ENCODE measurements at regions of chr15 and their contacts with region 1.

Region 1: GRCh38 chr15:84929744-84930371 is 45.4 kb downstream of the SLC28A1 start:
- DNase-seq: no peak
- H3K4me3 ChIP-seq: no peak overlapping the region
- H3K27ac ChIP-seq: no peak overlapping the region
- H3K4me1 ChIP-seq: no peaks in the 10 kb centered on the region; a peak in 1 of 7 replicates
- H3K27me3 ChIP-seq: no peaks in the 10 kb centered on the region
- CTCF ChIP-seq: no peak
- EP300 ChIP-seq: no peak
- POLR2A ChIP-seq: no peak
- RAD21 ChIP-seq: no peak

Region 2: GRCh38 chr15:84840741-84841429 is 89.0 kb before region 1 on chr15:
- CTCF ChIA-PET with region 1: interaction called, 41 read pairs
- POLR2A ChIA-PET with region 1: no interaction called
- DNase-seq: no peak
- H3K4me3 ChIP-seq: no peak overlapping the region
- H3K27ac ChIP-seq: no peak overlapping the region
- H3K4me1 ChIP-seq: no peaks in the 10 kb centered on the region
- H3K27me3 ChIP-seq: no peaks in the 10 kb centered on the region
- CTCF ChIP-seq: no peak
- EP300 ChIP-seq: no peak
- POLR2A ChIP-seq: no peak
- RAD21 ChIP-seq: no peak

Region 3: GRCh38 chr15:84871428-84872305 is 58.2 kb before region 1 on chr15:
- CTCF ChIA-PET with region 1: interaction called, 39 read pairs
- POLR2A ChIA-PET with region 1: no interaction called
- DNase-seq: no peak
- H3K4me3 ChIP-seq: no peak overlapping the region
- H3K27ac ChIP-seq: no peak overlapping the region
- H3K4me1 ChIP-seq: no peaks in the 10 kb centered on the region
- H3K27me3 ChIP-seq: no peaks in the 10 kb centered on the region
- CTCF ChIP-seq: peak; percentile 30 to 40 (median 40)
- EP300 ChIP-seq: no peak
- POLR2A ChIP-seq: no peak
- RAD21 ChIP-seq: peak; percentile 34 to 48

Region 4: GRCh38 chr15:84904419-84904818 is 25.4 kb before region 1 on chr15:
- CTCF ChIA-PET with region 1: interaction called, 14 read pairs
- POLR2A ChIA-PET with region 1: interaction called, 3 read pairs
- DNase-seq: no peak
- H3K4me3 ChIP-seq: no peak overlapping the region
- H3K27ac ChIP-seq: no peak overlapping the region
- H3K4me1 ChIP-seq: no peaks in the 10 kb centered on the region; a peak in 2 of 7 replicates
- H3K27me3 ChIP-seq: no peaks in the 10 kb centered on the region
- CTCF ChIP-seq: no peak
- EP300 ChIP-seq: no peak
- POLR2A ChIP-seq: no peak
- RAD21 ChIP-seq: no peak

Region 5: GRCh38 chr15:84944311-84944710 is 14.5 kb after region 1 on chr15:
- CTCF ChIA-PET with region 1: interaction called, 11 read pairs
- POLR2A ChIA-PET with region 1: no interaction called
- DNase-seq: no peak
- H3K4me3 ChIP-seq: no peak overlapping the region
- H3K27ac ChIP-seq: no peak overlapping the region
- H3K4me1 ChIP-seq: no peaks in the 10 kb centered on the region
- H3K27me3 ChIP-seq: no peaks in the 10 kb centered on the region
- CTCF ChIP-seq: no peak
- EP300 ChIP-seq: no peak
- POLR2A ChIP-seq: no peak
- RAD21 ChIP-seq: no peak

Region 6: DNA sequence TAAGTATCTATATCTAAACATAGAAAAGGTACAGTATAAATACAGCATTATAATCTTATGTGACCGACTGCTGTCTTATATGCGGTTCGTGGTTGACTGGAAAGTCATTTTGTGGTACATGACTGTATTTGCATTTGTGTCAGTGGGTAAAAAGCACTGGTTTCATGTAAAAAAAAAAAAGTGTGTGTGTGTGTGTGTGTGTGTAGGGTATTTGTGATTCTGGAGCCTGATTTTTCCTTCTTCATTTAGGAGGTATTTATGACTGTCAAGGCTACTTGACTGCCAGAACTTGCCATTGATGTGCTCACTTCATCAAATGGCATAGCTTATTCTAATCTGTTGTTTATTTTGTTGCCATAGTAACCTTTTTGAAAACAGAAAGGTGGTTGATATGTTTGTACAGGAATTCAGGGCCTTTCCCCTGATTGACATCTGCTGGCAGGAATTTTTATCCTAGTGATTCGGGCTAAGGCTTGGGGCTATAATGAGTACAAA is 513.8 kb after region 1 on chr15:
- CTCF ChIA-PET with region 1: no interaction called
- POLR2A ChIA-PET with region 1: no interaction called
- DNase-seq: no peak
- H3K4me3 ChIP-seq: no peak overlapping the region
- H3K27ac ChIP-seq: no peak overlapping the region
- H3K4me1 ChIP-seq: peaks cover 2 to 9% (median 5%) of the 10 kb centered on the region in 4 experiments; a peak in 4 of 7 replicates
- H3K27me3 ChIP-seq: no peaks in the 10 kb centered on the region
- CTCF ChIP-seq: no peak
- EP300 ChIP-seq: no peak
- POLR2A ChIP-seq: no peak
- RAD21 ChIP-seq: no peak

Measured in H1 (cell line).